Activated CD8-positive, alpha-beta T cell treated with anti-CD3 and anti-CD28 coated beads, Interleukin-2, amount 10 ng/mL, durations not matched to agents 7 days and 5 days (primary cell): ENCODE measurements at regions of chr16 and their contacts with region 1.

Region 1: GRCh38 chr16:69286941-69287713 is 24.0 kb upstream of the VPS4A start:
- DNase-seq: peak; percentile 69
- ATAC-seq: peak; percentile 53
- H3K4me3 Mint-ChIP-seq: no peak overlapping the region
- H3K27ac Mint-ChIP-seq: no peak overlapping the region
- H3K4me1 Mint-ChIP-seq: peaks cover 2% of the 10 kb centered on the region
- H3K27me3 Mint-ChIP-seq: no peaks in the 10 kb centered on the region

Region 2: GRCh38 chr16:69157196-69157595 is 129.9 kb before region 1 on chr16:
- CTCF ChIA-PET with region 1: interaction called, 95 read pairs
- POLR2A ChIA-PET with region 1: no interaction called
- DNase-seq: no peak
- ATAC-seq: no peak
- H3K4me3 Mint-ChIP-seq: no peak overlapping the region
- H3K27ac Mint-ChIP-seq: no peak overlapping the region
- H3K4me1 Mint-ChIP-seq: peaks cover 2% of the 10 kb centered on the region
- H3K27me3 Mint-ChIP-seq: no peaks in the 10 kb centered on the region

Region 3: DNA sequence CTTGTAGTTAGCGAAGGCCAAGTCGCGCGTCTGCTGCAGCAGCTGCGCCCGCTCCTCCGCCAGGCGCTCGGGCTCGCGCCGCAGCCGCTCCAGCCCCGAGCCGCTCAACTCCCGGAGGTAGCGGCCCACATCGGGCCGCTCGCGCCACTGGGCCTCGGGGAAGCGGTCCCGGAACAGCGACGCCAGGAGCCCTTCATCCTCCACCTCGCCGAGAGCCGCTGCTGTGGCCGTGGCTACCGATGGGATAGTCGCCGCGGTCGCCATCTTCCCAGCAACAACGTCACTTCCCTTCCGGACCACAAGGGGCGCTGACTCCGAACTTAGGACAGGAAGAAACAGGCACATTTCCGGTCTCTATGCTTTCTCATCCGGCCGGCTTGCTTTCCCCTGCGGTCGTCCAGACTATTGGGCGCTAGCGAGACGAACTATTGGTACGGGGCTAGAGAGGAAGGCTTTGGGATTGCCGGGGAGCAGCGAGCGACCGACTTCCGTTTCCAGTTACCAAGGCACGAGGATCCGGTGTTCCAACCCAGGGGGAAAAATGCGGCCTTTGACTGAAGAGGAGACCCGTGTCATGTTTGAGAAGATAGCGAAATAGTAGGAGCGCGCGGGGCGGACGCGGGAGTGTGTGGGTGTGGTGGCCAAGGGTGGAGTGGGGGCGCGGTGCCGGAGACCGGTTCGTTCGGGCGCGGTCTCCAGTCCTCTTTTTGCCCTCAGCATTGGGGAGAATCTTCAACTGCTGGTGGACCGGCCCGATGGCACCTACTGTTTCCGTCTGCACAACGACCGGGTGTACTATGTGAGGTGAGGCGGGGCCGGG is 52.4 kb after region 1 on chr16 and contains the starts of genes COG8 and NIP7:
- CTCF ChIA-PET with region 1: no interaction called
- POLR2A ChIA-PET with region 1: no interaction called
- DNase-seq: peak; percentile 95
- ATAC-seq: peak; percentile 88
- H3K4me3 Mint-ChIP-seq: peak within 1 kb of the TSS; percentile 98
- H3K27ac Mint-ChIP-seq: peak within 1 kb of the TSS; percentile 98
- H3K4me1 Mint-ChIP-seq: peaks cover 41% of the 10 kb centered on the region
- H3K27me3 Mint-ChIP-seq: no peaks in the 10 kb centered on the region
- total RNA-seq, gene COG8: 37.6 to 37.7 TPM
- total RNA-seq, gene NIP7: 35.3 to 36.0 TPM

Region 4: DNA sequence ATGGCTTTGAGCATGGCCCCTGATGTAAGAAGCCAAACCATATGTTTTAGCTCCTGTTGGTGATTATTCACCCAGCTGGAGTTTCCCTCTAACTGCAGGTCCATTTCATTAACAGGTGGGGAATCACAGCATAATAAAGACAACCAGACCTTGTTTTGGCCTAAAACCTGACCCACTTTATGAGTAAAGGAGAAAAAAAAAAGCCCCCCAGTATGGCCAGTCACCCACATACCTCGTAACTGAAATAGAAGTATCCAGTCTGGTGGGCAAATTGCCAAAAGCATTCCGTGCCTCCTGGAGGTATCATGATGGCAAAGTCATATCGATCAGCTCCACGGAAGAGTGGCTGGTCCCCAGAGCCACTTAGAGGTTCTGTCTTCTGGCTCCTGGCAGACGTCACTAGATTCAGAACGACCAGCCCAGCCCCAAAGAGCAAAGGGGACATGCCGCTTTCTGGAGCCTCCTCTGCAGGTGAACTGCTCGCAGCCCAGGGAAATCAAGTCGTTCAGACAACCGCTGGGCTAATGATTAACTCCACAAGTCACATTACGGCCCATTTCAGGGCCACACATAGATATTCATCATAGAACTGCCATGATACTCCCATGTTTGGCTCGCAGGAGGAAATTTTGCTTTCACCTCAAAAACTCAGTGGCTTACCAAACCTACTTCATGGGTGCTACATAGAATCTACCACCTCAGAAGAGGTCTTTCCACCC is 64.3 kb after region 1 on chr16 and contains the start of gene TMED6:
- CTCF ChIA-PET with region 1: no interaction called
- POLR2A ChIA-PET with region 1: no interaction called
- DNase-seq: no peak
- ATAC-seq: no peak
- H3K4me3 Mint-ChIP-seq: no peak within 1 kb of the TSS
- H3K27ac Mint-ChIP-seq: no peak within 1 kb of the TSS
- H3K4me1 Mint-ChIP-seq: no peaks in the 10 kb centered on the region
- H3K27me3 Mint-ChIP-seq: no peaks in the 10 kb centered on the region
- total RNA-seq, gene TMED6: 1.4 to 1.8 TPM

Region 5: DNA sequence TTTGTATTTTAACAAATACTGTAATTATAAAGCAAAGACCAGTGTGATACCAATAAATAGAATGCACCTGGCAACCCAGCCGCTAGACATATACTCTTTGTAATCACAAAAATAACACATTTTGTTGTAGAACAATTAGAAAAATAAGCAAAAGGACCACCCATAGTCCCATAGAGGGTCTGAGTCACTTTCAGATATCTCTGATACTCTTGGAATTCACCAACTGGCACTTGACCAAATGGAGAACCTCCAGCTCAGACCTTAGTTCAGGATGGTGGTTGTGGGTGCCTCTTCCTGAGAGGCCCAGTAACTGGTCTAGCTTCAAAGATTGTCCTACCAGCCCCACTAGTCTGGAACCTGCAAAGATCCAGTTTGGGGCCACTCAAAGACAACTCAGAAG is 99.5 kb after region 1 on chr16:
- CTCF ChIA-PET with region 1: no interaction called
- POLR2A ChIA-PET with region 1: no interaction called
- DNase-seq: no peak
- ATAC-seq: no peak
- H3K4me3 Mint-ChIP-seq: peak overlapping the region; percentile 89
- H3K27ac Mint-ChIP-seq: no peak overlapping the region
- H3K4me1 Mint-ChIP-seq: peaks cover 32% of the 10 kb centered on the region
- H3K27me3 Mint-ChIP-seq: no peaks in the 10 kb centered on the region